ENCODE measurements at regions of chr3 and their contacts with region 1.

Region 1: DNA sequence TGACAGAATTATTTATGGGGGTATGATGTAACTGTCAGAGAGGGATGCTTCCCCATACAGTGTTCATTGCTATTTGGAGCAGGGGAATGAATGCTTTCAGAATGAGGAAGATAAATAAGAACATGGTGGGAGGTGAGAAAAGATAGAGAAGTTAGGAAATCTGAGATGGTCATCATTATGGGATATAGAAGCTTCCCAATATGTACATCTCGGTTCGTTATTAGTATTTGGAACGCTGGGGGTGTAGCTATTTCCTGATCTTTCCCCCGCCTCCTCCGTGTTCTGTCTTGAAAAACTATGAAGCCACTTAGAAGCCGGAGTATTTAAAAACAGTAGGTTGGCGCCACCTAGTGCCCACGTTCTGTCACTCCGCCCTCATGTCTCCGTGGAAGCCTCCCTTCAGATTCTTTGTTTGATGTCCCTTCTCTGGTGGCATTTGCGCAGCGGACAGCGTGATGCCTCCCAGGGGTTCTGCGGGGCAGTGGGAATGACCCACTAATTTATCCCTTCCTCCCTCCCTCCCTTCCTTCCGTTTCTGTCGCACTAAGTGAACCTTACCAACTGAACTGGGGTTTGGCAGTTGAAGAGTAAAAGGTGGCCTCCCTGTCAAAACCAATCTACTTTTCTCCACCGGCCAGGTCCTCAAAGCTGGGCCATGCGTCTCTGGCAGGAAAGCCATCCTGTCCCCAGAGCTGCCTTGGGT is 184.5 kb downstream of the FEZF2 start:
- DNase-seq: peak; percentile 57 to 73
- ATAC-seq: peak; percentile 67 to 80
- H3K4me3 ChIP-seq: peak overlapping the region in 3 of 4 donors; percentile 10 to 29 (median 25)
- H3K27ac ChIP-seq: peak overlapping the region in 1 of 4 donors; percentile 41
- H3K4me1 ChIP-seq: peaks cover 11 to 12% of the 10 kb centered on the region in 2 donors
- H3K27me3 ChIP-seq: no peaks in the 10 kb centered on the region
- CTCF ChIP-seq: peak; percentile 73 to 88 (median 86)
- POLR2A ChIP-seq: no peak

Region 2: DNA sequence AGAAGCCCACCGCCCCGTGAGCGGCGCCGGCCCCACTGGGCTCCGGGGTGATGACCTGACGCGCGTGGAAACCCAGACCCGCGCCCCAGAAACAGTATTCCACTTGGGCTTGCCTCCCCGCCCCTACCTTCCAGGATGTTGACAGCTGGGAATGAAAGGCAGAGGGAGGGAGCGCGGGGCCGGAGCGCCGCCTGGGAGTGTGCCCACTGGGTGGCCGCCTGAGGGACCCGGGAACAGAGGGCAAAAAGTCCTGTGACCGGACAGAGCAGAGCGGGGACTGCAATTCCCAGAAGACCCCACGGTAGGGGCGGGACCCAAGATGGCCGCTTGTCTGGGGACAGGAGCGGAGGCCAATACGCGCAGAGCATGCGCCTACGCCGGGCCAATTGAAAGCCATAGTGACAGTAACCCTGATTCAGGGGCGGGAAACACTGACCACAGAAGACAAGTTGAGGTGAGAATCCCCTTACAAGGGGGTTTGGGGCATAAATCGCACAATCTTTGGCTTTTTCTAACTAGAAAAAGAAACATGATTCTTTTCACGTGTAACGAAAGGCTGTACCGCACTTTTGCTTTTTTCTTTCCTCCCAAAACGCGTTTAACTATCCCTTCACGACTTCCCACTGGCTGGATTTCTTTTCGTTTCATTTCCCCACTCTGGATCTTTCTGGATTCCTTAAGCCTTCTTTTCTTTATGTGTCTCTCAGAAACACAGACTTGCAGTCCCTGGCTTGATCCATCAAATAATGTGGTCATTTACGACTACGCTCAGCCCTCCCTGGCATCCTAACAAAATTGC is 937.5 kb before region 1 on chr3 and contains the start of gene FHIT:
- in situ Hi-C with region 1: no loop called
- intact Hi-C with region 1: loop called (anchors 1 kb)
- DNase-seq: peak; percentile 96 to 97
- ATAC-seq: peak; percentile 94 to 95
- H3K4me3 ChIP-seq: peak within 1 kb of the TSS; percentile 75 to 97 (median 84)
- H3K27ac ChIP-seq: peak within 1 kb of the TSS; percentile 86 to 96 (median 86)
- H3K4me1 ChIP-seq: peaks cover 10 to 17% of the 10 kb centered on the region in 2 donors
- H3K27me3 ChIP-seq: no peaks in the 10 kb centered on the region
- CTCF ChIP-seq: no peak
- POLR2A ChIP-seq: peak; percentile 49 to 66
- total RNA-seq, gene FHIT: 0.72 to 5.2 (median 2.1) TPM

Region 3: GRCh38 chr3:61682671-61683548 is 505.9 kb before region 1 on chr3:
- in situ Hi-C with region 1: loop called in 2 of 4 experiments (anchors 25 kb)
- intact Hi-C with region 1: no loop called
- DNase-seq: no peak
- ATAC-seq: peak; percentile 26 to 40
- H3K4me3 ChIP-seq: no peak overlapping the region
- H3K27ac ChIP-seq: peak overlapping the region; percentile 49 to 71 (median 64)
- H3K4me1 ChIP-seq: peaks cover 44 to 49% of the 10 kb centered on the region in 2 donors
- H3K27me3 ChIP-seq: no peaks in the 10 kb centered on the region
- CTCF ChIP-seq: no peak
- POLR2A ChIP-seq: no peak

Region 4: DNA sequence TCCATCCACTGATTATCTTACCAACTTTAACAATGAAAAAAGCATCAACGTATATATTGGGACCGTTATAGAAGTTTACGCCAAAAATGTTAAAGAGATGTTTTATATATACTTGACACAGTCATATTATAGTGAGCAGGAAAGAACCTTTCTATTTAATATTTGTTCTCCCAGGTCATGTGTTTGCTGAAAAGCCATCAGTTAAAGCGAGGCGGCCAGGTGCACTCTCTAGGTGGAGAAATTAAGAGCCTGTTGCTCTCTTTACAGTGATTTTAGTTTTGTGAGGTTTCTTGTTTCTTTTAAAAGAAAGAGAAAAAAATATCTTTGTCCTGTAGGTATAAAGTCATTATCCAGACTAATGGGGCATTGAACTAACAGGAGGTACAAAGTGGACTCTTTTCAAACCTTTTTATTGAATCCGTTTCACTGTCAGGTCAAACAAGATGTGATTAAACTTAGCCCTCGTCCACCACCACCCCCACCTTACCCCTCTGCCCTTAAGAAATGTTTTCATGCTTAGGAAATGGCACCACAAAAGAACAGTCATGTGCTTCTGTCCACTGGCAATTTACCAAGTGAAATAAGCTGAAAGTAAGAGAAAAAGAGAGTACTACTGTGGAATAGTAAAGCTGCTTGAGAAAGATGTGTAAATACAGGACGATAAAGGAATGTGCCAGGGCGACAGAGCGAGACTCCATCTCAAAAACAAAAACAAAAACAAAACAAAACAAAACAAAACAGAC is 347.6 kb before region 1 on chr3:
- in situ Hi-C with region 1: no loop called
- intact Hi-C with region 1: no loop called
- DNase-seq: no peak
- ATAC-seq: peak in 1 of 2 donors; percentile 55
- H3K4me3 ChIP-seq: no peak overlapping the region
- H3K27ac ChIP-seq: no peak overlapping the region
- H3K4me1 ChIP-seq: peaks cover 19 to 28% of the 10 kb centered on the region in 2 donors
- H3K27me3 ChIP-seq: no peaks in the 10 kb centered on the region
- CTCF ChIP-seq: no peak
- POLR2A ChIP-seq: no peak

Region 5: GRCh38 chr3:61858056-61858455 is 330.8 kb before region 1 on chr3:
- in situ Hi-C with region 1: loop called (anchors 5 kb)
- intact Hi-C with region 1: loop called (anchors 1 kb)
- DNase-seq: no peak
- ATAC-seq: peak; percentile 53 to 79
- H3K4me3 ChIP-seq: no peak overlapping the region
- H3K27ac ChIP-seq: no peak overlapping the region
- H3K4me1 ChIP-seq: peaks cover 25 to 40% of the 10 kb centered on the region in 2 donors
- H3K27me3 ChIP-seq: no peaks in the 10 kb centered on the region
- CTCF ChIP-seq: peak; percentile 16 to 67 (median 60)
- POLR2A ChIP-seq: no peak

Region 6: GRCh38 chr3:61864886-61865285 is 323.9 kb before region 1 on chr3:
- in situ Hi-C with region 1: loop called in 2 of 4 experiments (anchors 5 kb)
- intact Hi-C with region 1: no loop called
- DNase-seq: no peak
- ATAC-seq: no peak
- H3K4me3 ChIP-seq: no peak overlapping the region
- H3K27ac ChIP-seq: no peak overlapping the region
- H3K4me1 ChIP-seq: peaks cover 21 to 22% of the 10 kb centered on the region in 2 donors
- H3K27me3 ChIP-seq: no peaks in the 10 kb centered on the region
- CTCF ChIP-seq: no peak
- POLR2A ChIP-seq: no peak

Region 7: GRCh38 chr3:61954097-61954540 is 234.7 kb before region 1 on chr3:
- in situ Hi-C with region 1: no loop called
- intact Hi-C with region 1: loop called (anchors 5 kb)
- DNase-seq: no peak
- ATAC-seq: peak; percentile 73 to 83
- H3K4me3 ChIP-seq: no peak overlapping the region
- H3K27ac ChIP-seq: peak overlapping the region in 2 of 4 donors; percentile 1 to 60
- H3K4me1 ChIP-seq: peaks cover 53 to 54% of the 10 kb centered on the region in 2 donors
- H3K27me3 ChIP-seq: no peaks in the 10 kb centered on the region
- CTCF ChIP-seq: no peak
- POLR2A ChIP-seq: no peak